CD8-positive, alpha-beta memory T cell (primary cell): ENCODE measurements at regions of chr20 and their contacts with region 1.

Region 1: DNA sequence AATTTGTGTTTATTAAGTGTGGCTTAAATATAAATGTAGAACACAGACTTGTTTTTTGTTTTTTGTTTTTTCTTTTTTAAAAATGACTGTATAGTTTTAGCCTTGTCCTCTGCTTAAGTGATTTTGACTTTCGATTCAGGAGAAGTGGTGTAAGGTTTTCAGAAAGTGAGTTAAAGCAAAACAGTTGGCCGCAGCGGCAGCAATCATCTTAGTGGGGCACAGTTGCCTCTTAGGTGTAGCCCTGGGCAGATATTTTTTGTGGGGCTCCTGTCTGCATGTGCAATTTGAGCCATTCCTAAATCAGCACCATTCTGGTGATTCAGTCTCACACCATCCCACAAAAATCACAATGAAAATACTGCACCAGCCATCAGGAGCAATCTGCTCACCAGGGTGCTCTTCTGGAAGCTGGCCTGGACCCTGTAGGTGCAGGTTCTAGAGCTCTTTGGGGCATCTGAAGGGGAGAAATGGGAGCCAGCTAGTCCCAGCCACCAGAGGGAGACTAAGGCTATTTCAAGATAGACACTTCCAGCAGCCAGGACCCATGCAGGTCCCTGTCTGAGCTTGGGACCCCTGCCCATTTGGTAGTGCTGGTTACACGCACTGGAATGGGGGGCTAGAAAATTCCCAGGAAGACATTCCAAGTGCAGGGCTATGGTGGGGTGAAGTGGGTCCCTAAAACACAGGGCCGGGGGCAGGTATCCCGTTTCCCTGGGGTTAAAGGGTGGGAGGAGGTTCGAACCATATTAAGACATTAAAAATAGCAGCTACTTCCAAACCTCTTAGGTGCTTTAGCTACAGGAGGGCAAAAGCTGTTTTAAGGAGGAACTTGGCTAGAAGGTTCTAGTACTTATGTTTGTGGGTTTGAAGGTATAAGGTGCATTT is 156.6 kb downstream of the NFATC2 start:
- DNase-seq: peak in 3 of 5 donors; percentile 13 to 55 (median 30)
- H3K4me3 ChIP-seq: no peak overlapping the region
- H3K4me3 Mint-ChIP-seq: peak overlapping the region; percentile 1 to 83 (median 57)
- H3K27ac ChIP-seq: peak overlapping the region; percentile 35
- H3K27ac Mint-ChIP-seq: peak overlapping the region; percentile 77 to 97 (median 88)
- H3K4me1 ChIP-seq: peaks cover 39% of the 10 kb centered on the region
- H3K4me1 Mint-ChIP-seq: peaks cover 74 to 84% (median 77%) of the 10 kb centered on the region in 3 donors
- H3K27me3 ChIP-seq: no peaks in the 10 kb centered on the region
- H3K27me3 Mint-ChIP-seq: no peaks in the 10 kb centered on the region

Region 2: GRCh38 chr20:51372176-51372803 is 13.6 kb before region 1 on chr20:
- CTCF ChIA-PET with region 1: interaction called, 11 read pairs
- POLR2A ChIA-PET with region 1: no interaction called
- DNase-seq: peak; percentile 26 to 66 (median 41)
- H3K4me3 ChIP-seq: no peak overlapping the region
- H3K4me3 Mint-ChIP-seq: no peak overlapping the region
- H3K27ac ChIP-seq: no peak overlapping the region
- H3K27ac Mint-ChIP-seq: no peak overlapping the region
- H3K4me1 ChIP-seq: no peaks in the 10 kb centered on the region
- H3K4me1 Mint-ChIP-seq: peaks cover 5 to 10% (median 5%) of the 10 kb centered on the region in 3 donors
- H3K27me3 ChIP-seq: no peaks in the 10 kb centered on the region
- H3K27me3 Mint-ChIP-seq: peaks cover 0 to 1% of the 10 kb centered on the region in 2 donors

Region 3: DNA sequence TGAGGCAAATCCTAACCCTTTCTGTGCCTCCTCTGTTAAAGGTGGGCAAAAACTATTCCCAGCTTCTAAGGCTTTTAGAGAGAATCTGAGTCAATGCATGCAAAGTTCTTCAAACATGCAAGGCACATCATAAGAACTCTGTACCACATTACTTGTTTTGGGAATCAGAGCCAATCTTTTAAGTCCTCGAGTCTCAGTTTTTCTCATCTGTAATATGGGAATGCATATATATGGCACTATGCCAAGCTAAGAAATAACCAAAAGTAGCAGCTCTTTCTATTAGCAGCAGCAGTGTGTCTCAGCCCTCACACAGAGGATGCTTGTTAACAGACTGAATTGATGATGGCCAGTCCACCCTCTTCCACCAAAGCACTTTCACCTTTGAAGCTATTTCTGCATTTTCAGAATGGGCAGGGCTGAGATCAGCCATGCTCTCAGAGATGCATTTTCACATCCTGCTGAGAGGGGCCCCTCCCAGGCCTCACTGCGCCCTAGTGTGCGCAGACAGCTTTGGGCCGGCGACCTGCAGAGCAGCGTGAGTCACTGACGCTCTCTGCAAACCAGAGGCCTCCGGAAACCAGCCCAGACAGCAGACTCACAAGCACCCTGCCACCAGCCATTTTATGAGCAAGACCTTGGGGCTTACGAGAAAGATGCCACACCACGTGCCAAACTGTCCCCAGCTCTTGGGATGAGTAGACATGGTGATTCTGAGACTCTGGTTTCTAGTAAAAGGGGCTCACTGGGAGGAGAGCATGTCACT is 18.6 kb after region 1 on chr20:
- CTCF ChIA-PET with region 1: interaction called, 24 read pairs
- POLR2A ChIA-PET with region 1: interaction called, 9 read pairs
- DNase-seq: peak; percentile 44 to 97 (median 86)
- H3K4me3 ChIP-seq: no peak overlapping the region
- H3K4me3 Mint-ChIP-seq: peak overlapping the region; percentile 2 to 86 (median 79)
- H3K27ac ChIP-seq: peak overlapping the region; percentile 91
- H3K27ac Mint-ChIP-seq: peak overlapping the region; percentile 99 to 100 (median 100)
- H3K4me1 ChIP-seq: peaks cover 90% of the 10 kb centered on the region
- H3K4me1 Mint-ChIP-seq: peaks cover 92 to 98% (median 97%) of the 10 kb centered on the region in 3 donors
- H3K27me3 ChIP-seq: no peaks in the 10 kb centered on the region
- H3K27me3 Mint-ChIP-seq: no peaks in the 10 kb centered on the region

Region 4: DNA sequence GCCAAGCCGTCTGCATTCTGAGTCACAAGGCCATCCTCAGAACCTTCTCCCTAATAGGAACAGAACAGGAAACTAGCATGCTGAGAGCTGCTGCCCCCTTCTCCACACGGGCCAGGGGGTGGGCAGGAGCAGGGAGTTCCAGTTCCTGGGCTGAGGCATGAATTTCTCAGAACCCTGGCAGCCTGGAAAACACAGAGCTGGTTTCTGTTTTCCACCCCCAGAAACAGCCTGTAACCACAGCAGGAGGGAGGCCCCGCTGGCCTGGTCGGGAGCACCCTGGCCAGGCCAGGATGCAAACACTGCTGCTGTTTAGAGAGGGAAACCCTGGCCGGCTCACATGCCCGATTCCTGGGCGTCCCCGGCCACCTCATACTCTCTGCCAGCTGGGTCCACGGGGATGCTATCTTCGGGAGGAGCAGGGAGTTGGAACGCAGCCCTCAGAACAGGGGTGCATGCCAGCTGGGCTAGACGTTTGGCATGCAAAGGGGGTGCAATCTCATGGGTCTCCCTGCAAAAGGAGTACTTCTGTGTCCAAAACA is 26.5 kb after region 1 on chr20:
- CTCF ChIA-PET with region 1: interaction called, 34 read pairs
- POLR2A ChIA-PET with region 1: interaction called, 6 read pairs
- DNase-seq: no peak
- H3K4me3 ChIP-seq: no peak overlapping the region
- H3K4me3 Mint-ChIP-seq: peak overlapping the region in 6 of 7 donors; percentile 15 to 63 (median 40)
- H3K27ac ChIP-seq: no peak overlapping the region
- H3K27ac Mint-ChIP-seq: peak overlapping the region; percentile 79 to 100 (median 92)
- H3K4me1 ChIP-seq: peaks cover 81% of the 10 kb centered on the region
- H3K4me1 Mint-ChIP-seq: peaks cover 78 to 97% (median 91%) of the 10 kb centered on the region in 3 donors
- H3K27me3 ChIP-seq: no peaks in the 10 kb centered on the region
- H3K27me3 Mint-ChIP-seq: no peaks in the 10 kb centered on the region

Region 5: GRCh38 chr20:51420111-51420510 is 34.2 kb after region 1 on chr20:
- CTCF ChIA-PET with region 1: interaction called, 34 read pairs
- POLR2A ChIA-PET with region 1: interaction called, 5 read pairs
- DNase-seq: no peak
- H3K4me3 ChIP-seq: no peak overlapping the region
- H3K4me3 Mint-ChIP-seq: no peak overlapping the region
- H3K27ac ChIP-seq: no peak overlapping the region
- H3K27ac Mint-ChIP-seq: peak overlapping the region; percentile 47 to 100 (median 86)
- H3K4me1 ChIP-seq: peaks cover 63% of the 10 kb centered on the region
- H3K4me1 Mint-ChIP-seq: peaks cover 69 to 98% (median 90%) of the 10 kb centered on the region in 3 donors
- H3K27me3 ChIP-seq: no peaks in the 10 kb centered on the region
- H3K27me3 Mint-ChIP-seq: no peaks in the 10 kb centered on the region

Region 6: GRCh38 chr20:51541189-51542032 is 155.5 kb after region 1 on chr20:
- CTCF ChIA-PET with region 1: interaction called, 25 read pairs
- POLR2A ChIA-PET with region 1: interaction called, 3 read pairs
- DNase-seq: peak; percentile 78 to 93 (median 83)
- H3K4me3 ChIP-seq: peak overlapping the region; percentile 95
- H3K4me3 Mint-ChIP-seq: peak overlapping the region; percentile 93 to 100 (median 97)
- H3K27ac ChIP-seq: peak overlapping the region; percentile 96
- H3K27ac Mint-ChIP-seq: peak overlapping the region; percentile 95 to 100 (median 98)
- H3K4me1 ChIP-seq: peaks cover 48% of the 10 kb centered on the region
- H3K4me1 Mint-ChIP-seq: peaks cover 55 to 60% (median 58%) of the 10 kb centered on the region in 3 donors
- H3K27me3 ChIP-seq: no peaks in the 10 kb centered on the region
- H3K27me3 Mint-ChIP-seq: peaks cover 0 to 3% of the 10 kb centered on the region in 2 donors

Region 7: DNA sequence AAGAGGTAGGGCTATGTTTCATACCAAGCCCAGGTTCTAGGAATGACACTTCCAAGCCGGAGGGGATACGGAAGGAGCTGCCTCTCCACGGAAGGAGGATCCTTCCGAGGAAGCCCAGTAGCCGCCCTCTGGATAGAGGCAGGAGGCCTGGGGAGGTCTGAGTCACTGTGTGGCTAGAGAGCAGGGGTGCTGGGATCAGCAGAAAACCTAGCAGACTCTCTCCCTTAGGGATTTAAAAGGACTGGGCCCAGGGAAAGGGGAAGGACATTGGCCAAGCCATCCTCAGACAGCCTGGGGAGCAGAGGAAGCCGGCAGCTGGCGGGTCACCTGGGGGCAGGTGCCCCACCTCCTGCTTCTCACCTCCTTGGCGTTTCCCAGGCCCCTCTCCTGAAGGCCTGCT is 193.2 kb after region 1 on chr20:
- CTCF ChIA-PET with region 1: no interaction called
- POLR2A ChIA-PET with region 1: no interaction called
- DNase-seq: no peak
- H3K4me3 ChIP-seq: no peak overlapping the region
- H3K4me3 Mint-ChIP-seq: no peak overlapping the region
- H3K27ac ChIP-seq: no peak overlapping the region
- H3K27ac Mint-ChIP-seq: no peak overlapping the region
- H3K4me1 ChIP-seq: no peaks in the 10 kb centered on the region
- H3K4me1 Mint-ChIP-seq: peaks cover 0 to 3% (median 0%) of the 10 kb centered on the region in 3 donors
- H3K27me3 ChIP-seq: no peaks in the 10 kb centered on the region
- H3K27me3 Mint-ChIP-seq: peaks cover 0 to 1% of the 10 kb centered on the region in 2 donors

Region 8: GRCh38 chr20:51595058-51595532 is 209.2 kb after region 1 on chr20:
- CTCF ChIA-PET with region 1: interaction called, 51 read pairs
- POLR2A ChIA-PET with region 1: interaction called, 7 read pairs
- DNase-seq: peak; percentile 54 to 82 (median 61)
- H3K4me3 ChIP-seq: no peak overlapping the region
- H3K4me3 Mint-ChIP-seq: peak overlapping the region in 5 of 7 donors; percentile 27 to 71 (median 46)
- H3K27ac ChIP-seq: no peak overlapping the region
- H3K27ac Mint-ChIP-seq: peak overlapping the region; percentile 16 to 85 (median 52)
- H3K4me1 ChIP-seq: peaks cover 10% of the 10 kb centered on the region
- H3K4me1 Mint-ChIP-seq: peaks cover 11 to 22% (median 16%) of the 10 kb centered on the region in 3 donors
- H3K27me3 ChIP-seq: no peaks in the 10 kb centered on the region
- H3K27me3 Mint-ChIP-seq: peaks cover 0 to 3% of the 10 kb centered on the region in 2 donors